ENCODE measurements at regions of chr6 and their contacts with region 1.

Region 1: DNA sequence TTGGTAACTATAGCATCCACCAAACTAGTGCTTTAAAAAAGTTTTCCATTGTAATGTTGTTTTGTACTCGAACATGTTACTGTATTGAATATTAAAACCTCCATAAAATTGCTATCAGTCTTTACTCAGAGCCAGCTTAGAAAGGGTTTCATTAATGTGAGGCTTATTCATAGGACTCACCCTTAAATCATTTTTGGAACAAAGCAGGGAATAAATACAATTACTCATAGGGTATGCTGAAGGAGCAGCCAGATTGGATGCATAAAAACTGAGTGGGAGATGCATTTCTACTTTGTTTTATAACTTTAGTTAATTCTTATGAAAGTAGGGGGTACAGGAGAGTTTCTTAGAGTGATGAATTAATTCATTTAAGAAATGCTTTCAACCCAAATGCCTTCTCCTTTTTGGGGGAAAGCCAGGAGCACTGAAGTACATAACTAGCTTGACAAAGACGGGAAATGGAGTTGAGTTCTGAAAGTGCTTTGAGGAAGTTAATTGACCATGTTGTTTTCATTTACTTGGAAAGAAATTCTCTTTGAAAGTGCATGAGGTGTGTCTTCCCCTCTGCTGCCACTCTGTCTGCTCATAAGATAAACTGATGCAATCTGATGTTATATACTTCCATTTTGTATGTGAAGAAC is 90.3 kb downstream of the RNF144B start:
- DNase-seq: no peak
- H3K4me3 ChIP-seq: no peak overlapping the region
- H3K27ac ChIP-seq: no peak overlapping the region
- H3K27me3 ChIP-seq: no peaks in the 10 kb centered on the region
- CTCF ChIP-seq: no peak

Region 2: DNA sequence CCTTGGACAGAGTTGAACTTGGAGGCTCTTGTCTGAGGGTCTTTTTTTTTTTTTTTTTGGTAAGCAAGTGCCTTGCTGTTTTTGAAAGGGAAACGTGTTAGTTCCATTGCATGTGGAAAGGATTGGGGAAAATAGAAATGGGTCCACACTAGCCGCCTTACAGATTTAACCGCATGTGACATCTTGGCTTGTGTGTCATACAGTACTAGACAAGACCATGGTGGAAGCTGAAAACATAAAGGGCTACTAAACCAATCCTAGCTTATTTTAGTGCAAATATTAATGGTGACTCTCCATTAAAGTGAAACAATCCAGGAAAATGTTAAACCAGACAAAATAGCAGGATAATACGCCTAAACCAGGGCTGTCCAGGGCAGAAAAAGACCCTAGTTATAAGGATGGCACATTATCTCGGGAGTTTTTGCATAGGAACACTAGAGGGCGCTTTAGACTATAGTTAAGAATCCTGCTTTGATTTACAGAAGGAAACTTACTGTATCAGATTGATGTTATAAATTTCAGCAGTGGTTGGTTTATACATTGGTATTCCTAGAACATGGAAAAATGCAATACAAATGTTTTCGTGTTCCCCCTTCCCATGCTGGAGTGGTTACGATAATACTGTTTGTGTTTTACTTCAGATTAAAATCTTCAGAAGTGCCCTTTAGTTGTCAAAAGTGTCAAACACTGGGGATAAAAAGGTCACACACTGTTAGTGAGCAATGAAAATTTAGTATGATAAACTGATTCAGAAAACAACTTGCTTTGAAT is 153.3 kb before region 1 on chr6:
- in situ Hi-C with region 1: loop called (anchors 25 kb)
- DNase-seq: peak; percentile 57
- H3K4me3 ChIP-seq: no peak overlapping the region
- H3K27ac ChIP-seq: no peak overlapping the region
- H3K27me3 ChIP-seq: no peaks in the 10 kb centered on the region
- CTCF ChIP-seq: peak; percentile 65

Region 3: DNA sequence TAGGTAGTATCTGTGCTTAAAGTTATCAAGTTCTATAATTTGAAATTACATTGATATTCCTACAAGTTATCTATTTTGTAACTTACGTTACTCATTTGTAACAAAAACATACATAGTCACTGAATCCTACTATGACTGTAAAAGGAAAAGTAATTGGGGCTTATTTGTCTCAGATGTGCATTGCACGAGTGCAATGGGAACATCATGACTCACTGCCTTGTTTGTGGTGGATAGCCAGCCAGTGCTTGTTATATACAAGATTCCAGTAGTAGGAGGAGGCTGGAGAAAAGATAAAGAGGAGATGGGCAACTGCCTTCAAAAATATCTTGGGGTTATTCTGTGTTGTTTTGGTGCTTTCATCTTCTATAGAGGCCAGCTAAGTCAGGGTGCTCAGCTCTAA is 73.8 kb after region 1 on chr6:
- in situ Hi-C with region 1: no loop called
- DNase-seq: peak; percentile 86
- H3K4me3 ChIP-seq: no peak overlapping the region
- H3K27ac ChIP-seq: no peak overlapping the region
- H3K27me3 ChIP-seq: no peaks in the 10 kb centered on the region
- CTCF ChIP-seq: no peak